Esophagus muscularis mucosa (tissue), 4 donors: ENCODE measurements at regions of chr5 and their contacts with region 1.

Region 1: DNA sequence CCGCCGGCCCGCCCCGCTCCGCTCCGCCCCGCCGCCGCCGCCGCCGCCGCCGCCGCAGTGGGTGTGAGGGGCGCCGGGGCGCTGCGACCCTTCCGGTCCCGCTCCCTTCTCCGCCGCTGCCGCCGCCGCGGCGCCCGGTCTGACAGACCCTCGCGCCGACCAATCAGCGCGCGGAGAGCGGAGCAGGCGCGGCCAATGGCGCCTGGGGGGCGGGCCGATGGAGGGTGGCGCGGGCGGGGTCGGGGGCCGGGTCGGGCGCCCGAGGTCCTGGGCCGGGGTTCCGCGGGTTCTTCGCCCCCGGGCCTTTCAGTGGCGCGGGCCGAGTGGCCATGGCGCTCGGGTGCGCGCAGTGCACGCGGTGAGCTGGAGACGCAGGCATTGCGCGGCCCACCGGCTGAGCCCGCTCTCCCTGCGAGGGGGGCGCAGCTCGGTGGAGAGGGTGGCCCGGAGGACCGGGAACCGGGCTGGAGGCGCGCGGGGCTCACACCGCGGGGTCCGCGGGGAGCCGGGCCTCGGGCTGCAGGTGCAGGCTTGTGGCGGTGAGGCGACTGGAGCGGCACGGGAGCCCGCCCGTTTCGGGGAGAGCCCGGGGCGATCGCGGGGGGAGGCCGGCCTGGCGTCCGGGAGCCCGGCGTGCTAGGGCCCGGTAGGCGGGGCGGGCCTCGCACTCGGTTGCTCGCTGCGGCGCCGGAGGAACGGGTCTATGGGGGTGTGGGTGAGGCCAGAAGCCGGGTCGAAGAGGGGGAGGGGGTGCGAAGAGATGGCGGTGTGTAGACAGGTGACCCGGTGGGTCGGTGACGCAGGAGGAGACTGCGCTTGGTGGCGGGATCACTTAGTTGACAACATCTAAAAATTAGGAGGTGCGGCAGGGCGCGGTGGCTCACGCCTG is at the start of gene MAPK9:
- DNase-seq: no peak
- H3K4me3 ChIP-seq: peak within 1 kb of the TSS; percentile 97 to 99 (median 99)
- H3K27ac ChIP-seq: peak within 1 kb of the TSS; percentile 89 to 99 (median 94)
- H3K4me1 ChIP-seq: peaks cover 19 to 37% (median 31%) of the 10 kb centered on the region in 4 donors
- H3K27me3 ChIP-seq: no peaks in the 10 kb centered on the region
- CTCF ChIP-seq: no peak
- EP300 ChIP-seq: no peak
- POLR2A ChIP-seq: no peak
- total RNA-seq, gene MAPK9: 36.4 to 42.3 (median 37.8) TPM

Region 2: DNA sequence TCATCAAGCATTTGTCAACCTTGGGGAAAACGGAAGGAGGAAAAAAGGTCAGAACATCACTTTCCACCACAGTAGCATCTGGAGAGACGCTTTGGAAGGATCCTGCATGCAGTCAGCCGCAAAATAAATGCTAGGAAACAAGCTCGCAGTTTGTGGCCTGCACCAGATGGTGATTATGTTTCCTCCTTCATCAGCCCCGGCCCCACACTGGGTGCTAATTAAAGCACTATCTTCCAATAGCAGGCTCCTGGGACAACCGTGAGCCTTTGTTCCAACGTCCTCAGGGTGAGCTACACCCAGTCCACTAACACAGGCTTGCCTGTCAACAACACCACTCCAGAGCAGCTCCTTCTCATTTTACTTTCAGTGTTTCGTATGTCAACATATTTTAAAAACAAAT is 284.6 kb before region 1 on chr5:
- intact Hi-C with region 1: no loop called
- DNase-seq: no peak
- H3K4me3 ChIP-seq: no peak overlapping the region
- H3K27ac ChIP-seq: peak overlapping the region in 2 of 4 donors; percentile 22 to 26
- H3K4me1 ChIP-seq: peaks cover 10 to 31% (median 18%) of the 10 kb centered on the region in 4 donors
- H3K27me3 ChIP-seq: no peaks in the 10 kb centered on the region
- CTCF ChIP-seq: no peak
- EP300 ChIP-seq: no peak
- POLR2A ChIP-seq: no peak

Region 3: GRCh38 chr5:180328296-180329137 is 36.3 kb after region 1 on chr5:
- intact Hi-C with region 1: loop called (anchors 5 kb)
- DNase-seq: no peak
- H3K4me3 ChIP-seq: no peak overlapping the region
- H3K27ac ChIP-seq: peak overlapping the region in 1 of 4 donors; percentile 7
- H3K4me1 ChIP-seq: peaks cover 0 to 26% (median 7%) of the 10 kb centered on the region in 4 donors
- H3K27me3 ChIP-seq: no peaks in the 10 kb centered on the region
- CTCF ChIP-seq: peak; percentile 62 to 76 (median 72)
- EP300 ChIP-seq: no peak
- POLR2A ChIP-seq: no peak

Region 4: DNA sequence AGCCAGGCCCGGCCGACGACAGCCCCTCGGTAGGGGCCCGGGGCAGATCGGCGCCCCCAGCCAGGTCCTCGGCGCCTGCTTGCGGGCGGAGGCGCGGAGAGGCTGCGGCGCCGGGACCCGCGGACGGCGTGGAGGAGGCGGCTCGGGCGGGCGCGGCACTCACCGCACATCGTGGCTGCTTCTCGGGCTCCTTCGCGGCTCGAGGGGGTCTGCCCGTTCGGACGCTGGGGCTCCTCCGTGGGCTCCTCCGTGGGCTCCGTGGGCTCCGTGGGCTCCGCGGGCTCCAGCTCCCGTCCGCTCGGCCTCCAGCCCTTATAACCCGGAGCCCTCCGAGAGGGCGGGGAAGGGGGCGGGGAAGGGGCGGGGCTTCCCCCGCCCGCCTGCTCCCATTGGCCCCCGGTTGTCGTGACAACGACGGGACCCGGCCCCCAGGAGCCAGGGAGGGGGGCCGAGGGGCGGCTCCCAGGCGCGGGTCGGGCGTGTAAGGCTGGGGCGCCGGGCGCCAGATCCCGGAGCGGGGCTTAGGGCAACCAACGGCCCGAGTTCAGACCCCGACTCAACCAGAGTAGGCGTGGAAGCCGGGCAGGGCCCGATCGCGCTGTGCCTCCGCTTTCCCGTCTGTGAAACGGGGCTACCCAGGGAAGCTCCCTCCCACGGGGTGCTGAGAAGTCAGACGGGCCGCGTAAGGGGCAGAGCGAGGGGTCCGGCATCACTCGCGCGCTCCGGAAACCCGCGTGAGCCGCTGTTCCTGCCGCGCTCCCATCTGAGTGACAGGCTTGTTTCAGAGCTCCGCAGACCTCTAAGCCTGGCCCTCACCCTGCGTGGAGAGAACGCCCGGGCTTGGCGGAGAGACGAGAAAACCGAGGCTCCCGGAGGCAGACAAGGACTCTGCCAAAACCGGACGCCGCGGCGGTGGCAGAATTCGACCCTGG is 61.1 kb after region 1 on chr5 and contains the start of gene GFPT2:
- intact Hi-C with region 1: loop called (anchors 10 kb)
- DNase-seq: peak; percentile 93
- H3K4me3 ChIP-seq: peak within 1 kb of the TSS; percentile 67 to 89 (median 79)
- H3K27ac ChIP-seq: peak within 1 kb of the TSS; percentile 78 to 88 (median 82)
- H3K4me1 ChIP-seq: peaks cover 18 to 46% (median 40%) of the 10 kb centered on the region in 4 donors
- H3K27me3 ChIP-seq: peaks cover 0 to 16% (median 0%) of the 10 kb centered on the region in 4 donors
- CTCF ChIP-seq: no peak
- EP300 ChIP-seq: no peak
- POLR2A ChIP-seq: peak; percentile 57
- total RNA-seq, gene GFPT2: 30.1 to 114 (median 33.6) TPM

Region 5: GRCh38 chr5:180470966-180471582 is 178.9 kb after region 1 on chr5:
- intact Hi-C with region 1: loop called (anchors 2 kb)
- DNase-seq: no peak
- H3K4me3 ChIP-seq: no peak overlapping the region
- H3K27ac ChIP-seq: no peak overlapping the region
- H3K4me1 ChIP-seq: peaks cover 0 to 19% (median 7%) of the 10 kb centered on the region in 4 donors
- H3K27me3 ChIP-seq: peaks cover 0 to 13% (median 0%) of the 10 kb centered on the region in 4 donors
- CTCF ChIP-seq: peak; percentile 78 to 94 (median 87)
- EP300 ChIP-seq: no peak
- POLR2A ChIP-seq: no peak